Transverse colon (tissue), 4 donors: ENCODE measurements at regions of chr3 and their contacts with region 1.

Region 1: DNA sequence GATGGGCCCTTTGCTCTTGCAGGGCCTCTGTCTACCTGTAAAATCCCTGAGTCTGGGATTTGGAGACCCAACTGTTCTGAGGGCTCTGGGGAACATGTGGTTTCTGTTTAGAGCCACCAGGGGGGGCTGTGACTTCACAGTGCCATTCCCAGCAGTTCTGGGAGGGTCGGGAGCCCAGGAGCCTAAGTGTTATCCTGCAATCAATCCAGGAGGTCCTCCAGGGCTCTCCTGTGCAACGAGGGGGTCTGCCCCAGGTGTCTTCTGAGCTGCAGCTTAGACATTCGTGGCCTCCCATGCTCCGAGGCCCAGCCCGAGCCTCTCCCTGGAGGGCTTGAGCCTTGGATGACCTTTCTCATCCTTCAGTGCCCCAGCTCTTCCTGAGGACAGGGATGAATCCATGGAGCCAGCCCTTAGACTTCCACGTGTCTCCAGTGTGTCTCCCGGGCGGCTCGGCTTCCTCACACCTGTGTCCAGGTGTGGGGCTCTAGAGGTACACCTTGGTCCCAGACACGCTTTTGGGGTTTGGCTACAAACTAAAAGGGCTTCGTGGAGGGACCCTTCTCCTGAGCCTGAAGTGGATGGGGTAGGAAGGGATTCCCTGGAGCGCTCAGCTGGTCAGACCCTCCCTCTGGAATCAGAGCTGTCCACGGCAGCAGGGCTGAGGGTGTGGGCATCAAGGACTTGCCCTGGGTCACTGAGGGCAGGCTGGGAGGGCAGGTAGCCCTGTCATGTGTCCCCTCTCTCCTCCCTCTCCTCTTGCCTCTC is 20.3 kb upstream of the ABTB1 start:
- DNase-seq: peak; percentile 47
- H3K4me3 ChIP-seq: no peak overlapping the region
- H3K27ac ChIP-seq: no peak overlapping the region
- H3K4me1 ChIP-seq: no peaks in the 10 kb centered on the region
- H3K27me3 ChIP-seq: no peaks in the 10 kb centered on the region
- CTCF ChIP-seq: peak; percentile 73 to 89 (median 85)
- EP300 ChIP-seq: no peak
- POLR2A ChIP-seq: no peak

Region 2: GRCh38 chr3:127389420-127389819 is 263.0 kb before region 1 on chr3:
- in situ Hi-C with region 1: no loop called
- intact Hi-C with region 1: no loop called
- DNase-seq: no peak
- H3K4me3 ChIP-seq: no peak overlapping the region
- H3K27ac ChIP-seq: no peak overlapping the region
- H3K4me1 ChIP-seq: no peaks in the 10 kb centered on the region
- H3K27me3 ChIP-seq: peaks cover 4% of the 10 kb centered on the region
- CTCF ChIP-seq: no peak
- EP300 ChIP-seq: no peak
- POLR2A ChIP-seq: no peak

Region 3: GRCh38 chr3:127831723-127832172 is 179.3 kb after region 1 on chr3:
- in situ Hi-C with region 1: loop called in 3 of 4 experiments (anchors 10 to 25 kb)
- intact Hi-C with region 1: loop called (anchors 5 kb)
- DNase-seq: peak; percentile 74
- H3K4me3 ChIP-seq: no peak overlapping the region
- H3K27ac ChIP-seq: no peak overlapping the region
- H3K4me1 ChIP-seq: no peaks in the 10 kb centered on the region
- H3K27me3 ChIP-seq: no peaks in the 10 kb centered on the region
- CTCF ChIP-seq: peak; percentile 71 to 84 (median 80)
- EP300 ChIP-seq: no peak
- POLR2A ChIP-seq: no peak

Region 4: GRCh38 chr3:127959846-127960245 is 307.4 kb after region 1 on chr3:
- in situ Hi-C with region 1: loop called in 3 of 4 experiments (anchors 10 to 25 kb)
- intact Hi-C with region 1: no loop called
- DNase-seq: peak; percentile 11
- H3K4me3 ChIP-seq: no peak overlapping the region
- H3K27ac ChIP-seq: no peak overlapping the region
- H3K4me1 ChIP-seq: peaks cover 0 to 4% (median 0%) of the 10 kb centered on the region in 4 donors
- H3K27me3 ChIP-seq: no peaks in the 10 kb centered on the region
- CTCF ChIP-seq: peak in 4 of 5 experiments; percentile 16 to 35 (median 25)
- EP300 ChIP-seq: no peak
- POLR2A ChIP-seq: no peak

Region 5: GRCh38 chr3:127970966-127971592 is 318.7 kb after region 1 on chr3:
- in situ Hi-C with region 1: loop called in 3 of 4 experiments (anchors 10 to 25 kb)
- intact Hi-C with region 1: loop called (anchors 5 kb)
- DNase-seq: peak; percentile 29
- H3K4me3 ChIP-seq: no peak overlapping the region
- H3K27ac ChIP-seq: no peak overlapping the region
- H3K4me1 ChIP-seq: peaks cover 0 to 8% (median 0%) of the 10 kb centered on the region in 4 donors
- H3K27me3 ChIP-seq: peaks cover 11% of the 10 kb centered on the region
- CTCF ChIP-seq: peak; percentile 59 to 70 (median 70)
- EP300 ChIP-seq: no peak
- POLR2A ChIP-seq: no peak